ENCODE measurements at regions of chr3 and their contacts with region 1.

Region 1: DNA sequence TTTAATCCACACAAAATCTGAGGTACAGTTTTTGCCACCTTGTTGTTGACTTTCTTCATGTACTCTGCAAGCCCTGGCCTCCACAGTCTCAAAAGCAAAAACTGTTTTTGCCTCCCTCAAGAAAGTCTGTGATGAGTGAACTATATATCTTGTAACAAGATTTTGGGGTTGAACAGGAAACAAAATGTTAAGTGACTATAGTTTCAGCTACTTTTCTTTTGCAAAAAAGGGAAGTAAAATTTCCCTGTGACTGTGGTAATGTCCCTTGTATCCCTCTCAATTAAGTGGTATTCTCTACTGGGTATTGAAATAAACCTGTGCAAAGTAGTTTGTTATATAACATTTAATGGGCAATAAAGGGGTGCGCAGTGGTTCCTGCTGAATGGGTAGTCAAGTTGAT is 21.3 kb upstream of the SCAANT1 start:
- DNase-seq: peak; percentile 44 to 69 (median 60)
- H3K4me3 ChIP-seq: peak overlapping the region in 1 of 3 experiments; percentile 61
- H3K4me3 Mint-ChIP-seq: peak overlapping the region; percentile 41 to 83
- H3K27ac ChIP-seq: peak overlapping the region in 1 of 2 donors; percentile 79
- H3K27ac Mint-ChIP-seq: peak overlapping the region; percentile 90 to 97 (median 95)
- H3K4me1 ChIP-seq: peaks cover 75 to 87% of the 10 kb centered on the region in 2 donors
- H3K4me1 Mint-ChIP-seq: peaks cover 92% of the 10 kb centered on the region
- H3K27me3 ChIP-seq: no peaks in the 10 kb centered on the region
- H3K27me3 Mint-ChIP-seq: peaks cover 0 to 2% (median 0%) of the 10 kb centered on the region in 3 donors
- CTCF ChIP-seq: no peak

Region 2: DNA sequence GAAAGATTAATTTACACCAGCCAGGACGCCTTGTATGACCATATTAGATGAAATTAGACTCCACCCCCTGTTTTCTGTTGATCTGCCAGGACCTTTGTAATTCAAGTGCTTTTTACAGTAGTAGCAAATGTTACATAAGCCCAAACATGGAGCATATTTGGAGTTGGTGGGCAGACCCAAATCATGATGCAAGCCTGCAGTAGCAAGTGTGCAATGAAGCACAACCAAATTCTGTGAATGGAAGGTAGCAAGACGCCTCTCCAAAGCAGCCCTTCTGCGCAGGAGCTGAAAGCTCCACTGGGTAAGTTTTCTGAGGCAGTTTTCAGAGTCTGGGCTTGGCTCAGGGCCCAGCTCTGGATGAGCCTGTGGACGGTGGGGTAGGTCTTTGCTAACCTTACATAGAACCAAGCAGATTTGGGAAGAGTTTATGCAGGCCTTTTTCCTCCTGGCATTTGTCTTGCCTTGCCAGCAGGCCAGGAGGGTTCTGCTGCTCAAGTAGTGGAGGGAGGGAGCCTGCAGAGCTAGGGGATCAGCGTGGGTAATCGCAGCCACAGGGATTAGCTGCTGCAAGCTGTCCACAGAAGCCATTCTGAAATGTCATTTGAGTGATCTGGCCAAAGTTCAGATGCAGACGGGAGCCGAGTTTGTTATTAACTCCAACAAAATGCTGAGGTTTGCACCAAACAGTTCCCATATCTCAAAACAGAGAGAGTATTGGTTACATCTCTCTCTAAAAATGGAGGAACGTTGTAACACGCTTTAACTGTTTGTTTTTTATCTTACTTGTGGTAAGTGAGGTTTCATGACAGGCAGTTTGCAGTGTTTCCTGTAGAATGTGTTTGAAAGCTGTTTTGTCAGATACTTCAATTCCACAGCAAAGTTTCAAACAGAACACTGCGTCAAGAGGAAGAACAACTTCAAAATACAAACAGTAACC is 34.5 kb after region 1 on chr3:
- intact Hi-C with region 1: loop called in 1 of 2 experiments (anchors 5 kb)
- DNase-seq: no peak
- H3K4me3 ChIP-seq: peak overlapping the region; percentile 6 to 63 (median 30)
- H3K4me3 Mint-ChIP-seq: peak overlapping the region; percentile 61 to 83
- H3K27ac ChIP-seq: peak overlapping the region; percentile 72 to 79
- H3K27ac Mint-ChIP-seq: peak overlapping the region; percentile 82 to 95 (median 91)
- H3K4me1 ChIP-seq: peaks cover 45 to 48% of the 10 kb centered on the region in 2 donors
- H3K4me1 Mint-ChIP-seq: peaks cover 66% of the 10 kb centered on the region
- H3K27me3 ChIP-seq: no peaks in the 10 kb centered on the region
- H3K27me3 Mint-ChIP-seq: no peaks in the 10 kb centered on the region
- CTCF ChIP-seq: no peak